Activated CD4-positive, alpha-beta T cell treated with anti-CD3 and anti-CD28 coated beads, Interleukin-2, amount 10 ng/mL, durations not matched to agents 24 days and 14 days (primary cell): ENCODE measurements at regions of chr7 and their contacts with region 1.

Region 1: GRCh38 chr7:36600869-36601530 is 123.3 kb downstream of the AOAH start:
- DNase-seq: peak; percentile 67
- H3K4me3 Mint-ChIP-seq: no peak overlapping the region
- H3K27ac Mint-ChIP-seq: peak overlapping the region; percentile 53
- H3K4me1 Mint-ChIP-seq: peaks cover 62% of the 10 kb centered on the region
- H3K27me3 Mint-ChIP-seq: no peaks in the 10 kb centered on the region

Region 2: GRCh38 chr7:36473454-36474282 is 127.3 kb before region 1 on chr7:
- intact Hi-C with region 1: no loop called
- DNase-seq: peak; percentile 78
- H3K4me3 Mint-ChIP-seq: no peak overlapping the region
- H3K27ac Mint-ChIP-seq: no peak overlapping the region
- H3K4me1 Mint-ChIP-seq: peaks cover 18% of the 10 kb centered on the region
- H3K27me3 Mint-ChIP-seq: no peaks in the 10 kb centered on the region

Region 3: GRCh38 chr7:36526863-36527548 is 74.0 kb before region 1 on chr7:
- intact Hi-C with region 1: loop called (anchors 1 kb)
- DNase-seq: peak; percentile 57
- H3K4me3 Mint-ChIP-seq: no peak overlapping the region
- H3K27ac Mint-ChIP-seq: peak overlapping the region; percentile 45
- H3K4me1 Mint-ChIP-seq: peaks cover 17% of the 10 kb centered on the region
- H3K27me3 Mint-ChIP-seq: peaks cover 4% of the 10 kb centered on the region

Region 4: GRCh38 chr7:36583318-36583717 is 17.7 kb before region 1 on chr7:
- intact Hi-C with region 1: loop called (anchors 2 kb)
- DNase-seq: no peak
- H3K4me3 Mint-ChIP-seq: no peak overlapping the region
- H3K27ac Mint-ChIP-seq: no peak overlapping the region
- H3K4me1 Mint-ChIP-seq: peaks cover 7% of the 10 kb centered on the region
- H3K27me3 Mint-ChIP-seq: no peaks in the 10 kb centered on the region

Region 5: GRCh38 chr7:36639826-36640225 is 38.8 kb after region 1 on chr7:
- intact Hi-C with region 1: loop called (anchors 5 kb)
- DNase-seq: peak; percentile 85
- H3K4me3 Mint-ChIP-seq: peak overlapping the region; percentile 69
- H3K27ac Mint-ChIP-seq: peak overlapping the region; percentile 88
- H3K4me1 Mint-ChIP-seq: peaks cover 46% of the 10 kb centered on the region
- H3K27me3 Mint-ChIP-seq: no peaks in the 10 kb centered on the region

Region 6: DNA sequence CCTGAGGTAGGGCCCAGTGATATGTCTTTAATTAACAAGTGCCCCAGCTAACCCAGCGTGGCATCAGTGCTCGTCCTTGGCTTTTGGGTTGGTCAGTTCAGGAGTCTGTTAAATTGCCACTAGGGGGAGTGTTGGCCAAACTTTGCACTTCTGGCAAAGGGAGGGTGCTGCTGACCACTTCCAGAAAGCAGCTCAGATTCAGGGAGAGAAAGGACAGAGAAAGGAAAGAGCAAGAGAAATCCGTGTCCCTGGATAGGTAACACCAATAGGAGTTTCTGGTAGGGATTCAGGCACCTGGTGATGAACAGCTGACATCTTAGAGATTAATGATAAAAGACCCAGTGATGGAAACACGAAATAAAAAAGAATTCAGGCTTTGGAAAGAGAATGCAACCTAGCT is 366.4 kb after region 1 on chr7:
- intact Hi-C with region 1: loop called (anchors 10 kb)
- DNase-seq: no peak
- H3K4me3 Mint-ChIP-seq: no peak overlapping the region
- H3K27ac Mint-ChIP-seq: no peak overlapping the region
- H3K4me1 Mint-ChIP-seq: peaks cover 35% of the 10 kb centered on the region
- H3K27me3 Mint-ChIP-seq: no peaks in the 10 kb centered on the region

Region 7: GRCh38 chr7:37181550-37181932 is 580.5 kb after region 1 on chr7:
- intact Hi-C with region 1: loop called (anchors 10 kb)
- DNase-seq: peak; percentile 43
- H3K4me3 Mint-ChIP-seq: no peak overlapping the region
- H3K27ac Mint-ChIP-seq: no peak overlapping the region
- H3K4me1 Mint-ChIP-seq: peaks cover 13% of the 10 kb centered on the region
- H3K27me3 Mint-ChIP-seq: no peaks in the 10 kb centered on the region